AG04450 (cell line): ENCODE measurements at regions of chr18 and their contacts with region 1.

Region 1: DNA sequence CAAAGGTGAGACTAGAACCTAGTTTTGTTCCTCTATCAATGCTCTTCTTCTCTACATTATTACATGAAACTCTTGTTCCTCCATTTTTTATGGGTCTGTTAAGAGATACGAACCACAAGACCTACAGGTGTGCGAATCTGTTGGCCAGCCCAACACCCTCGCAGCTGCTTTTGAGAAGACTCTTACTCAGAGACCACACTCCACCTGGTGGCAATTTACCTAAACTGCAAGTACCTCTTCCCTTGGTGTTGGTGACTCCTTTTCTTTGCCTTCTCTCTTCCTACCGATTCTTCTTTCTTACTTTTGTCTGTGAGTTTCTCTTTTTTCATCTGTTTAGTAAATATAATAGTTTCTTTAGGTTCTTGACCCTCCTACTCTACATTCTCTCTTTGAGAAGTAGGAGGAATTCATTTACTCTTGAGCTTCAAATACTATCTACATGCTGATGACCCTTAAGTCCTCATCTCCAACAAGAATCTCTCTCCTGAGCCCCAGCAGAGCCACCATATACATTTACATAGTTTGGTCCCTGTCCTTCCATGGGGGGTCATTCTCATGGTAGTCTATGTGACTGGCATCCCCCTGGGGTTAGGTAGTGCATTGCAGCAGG is 81.8 kb upstream of the GAREM1 start:
- DNase-seq: peak; percentile 41
- H3K4me3 ChIP-seq: no peak overlapping the region
- H3K27ac ChIP-seq: no peak overlapping the region
- H3K27me3 ChIP-seq: peaks cover 3% of the 10 kb centered on the region
- CTCF ChIP-seq: peak; percentile 77

Region 2: GRCh38 chr18:32158108-32158624 is 394.4 kb before region 1 on chr18:
- CTCF ChIA-PET with region 1: interaction called, 220 read pairs
- POLR2A ChIA-PET with region 1: no interaction called
- DNase-seq: peak; percentile 72
- H3K4me3 ChIP-seq: no peak overlapping the region
- H3K27ac ChIP-seq: no peak overlapping the region
- H3K27me3 ChIP-seq: peaks cover 9% of the 10 kb centered on the region
- CTCF ChIP-seq: peak; percentile 92

Region 3: DNA sequence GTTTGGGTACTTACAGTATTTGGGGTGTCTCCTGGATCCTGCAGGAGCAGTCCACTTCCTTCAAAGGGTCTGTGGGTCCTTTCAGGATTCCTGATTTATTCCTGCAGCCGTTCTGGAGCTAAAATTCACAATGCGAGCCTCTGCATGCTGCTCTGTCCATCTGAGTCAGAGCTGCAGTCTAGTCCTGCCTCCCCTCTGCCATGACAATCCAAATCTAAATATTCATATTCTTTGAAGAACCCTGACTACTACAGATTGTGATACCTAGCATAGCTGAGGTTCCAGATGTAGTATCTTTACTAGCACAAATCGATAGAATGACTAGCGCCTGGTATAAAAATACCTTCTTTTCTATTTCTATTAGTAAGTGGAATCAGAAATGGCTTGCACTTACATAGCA is 50.5 kb before region 1 on chr18:
- CTCF ChIA-PET with region 1: no interaction called
- POLR2A ChIA-PET with region 1: no interaction called
- DNase-seq: no peak
- H3K4me3 ChIP-seq: no peak overlapping the region
- H3K27ac ChIP-seq: no peak overlapping the region
- H3K27me3 ChIP-seq: no peaks in the 10 kb centered on the region
- CTCF ChIP-seq: no peak

Region 4: DNA sequence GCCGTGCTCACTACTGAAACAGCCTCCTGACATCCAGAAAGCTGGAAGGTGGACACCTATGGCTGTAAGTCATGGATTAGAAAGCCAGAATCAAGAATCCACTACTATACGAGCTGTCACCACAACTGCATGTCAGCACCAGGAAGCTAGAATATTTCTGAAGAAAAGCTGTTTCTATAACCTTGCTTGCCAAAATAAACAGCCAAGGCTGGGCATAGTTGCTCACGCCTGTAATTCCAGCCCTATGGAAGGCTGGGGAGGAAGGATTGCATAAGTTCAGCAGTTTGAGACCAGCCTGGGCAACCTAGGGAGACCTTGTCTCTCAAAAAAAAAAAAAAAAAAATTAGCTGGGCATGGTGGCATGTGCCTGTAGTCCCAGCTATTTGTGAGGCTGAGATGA is 14.4 kb after region 1 on chr18:
- CTCF ChIA-PET with region 1: interaction called, 24 read pairs
- POLR2A ChIA-PET with region 1: no interaction called
- DNase-seq: no peak
- H3K4me3 ChIP-seq: no peak overlapping the region
- H3K27ac ChIP-seq: no peak overlapping the region
- H3K27me3 ChIP-seq: no peaks in the 10 kb centered on the region
- CTCF ChIP-seq: no peak